ENCODE measurements at regions of chr15 and their contacts with region 1.

Region 1: DNA sequence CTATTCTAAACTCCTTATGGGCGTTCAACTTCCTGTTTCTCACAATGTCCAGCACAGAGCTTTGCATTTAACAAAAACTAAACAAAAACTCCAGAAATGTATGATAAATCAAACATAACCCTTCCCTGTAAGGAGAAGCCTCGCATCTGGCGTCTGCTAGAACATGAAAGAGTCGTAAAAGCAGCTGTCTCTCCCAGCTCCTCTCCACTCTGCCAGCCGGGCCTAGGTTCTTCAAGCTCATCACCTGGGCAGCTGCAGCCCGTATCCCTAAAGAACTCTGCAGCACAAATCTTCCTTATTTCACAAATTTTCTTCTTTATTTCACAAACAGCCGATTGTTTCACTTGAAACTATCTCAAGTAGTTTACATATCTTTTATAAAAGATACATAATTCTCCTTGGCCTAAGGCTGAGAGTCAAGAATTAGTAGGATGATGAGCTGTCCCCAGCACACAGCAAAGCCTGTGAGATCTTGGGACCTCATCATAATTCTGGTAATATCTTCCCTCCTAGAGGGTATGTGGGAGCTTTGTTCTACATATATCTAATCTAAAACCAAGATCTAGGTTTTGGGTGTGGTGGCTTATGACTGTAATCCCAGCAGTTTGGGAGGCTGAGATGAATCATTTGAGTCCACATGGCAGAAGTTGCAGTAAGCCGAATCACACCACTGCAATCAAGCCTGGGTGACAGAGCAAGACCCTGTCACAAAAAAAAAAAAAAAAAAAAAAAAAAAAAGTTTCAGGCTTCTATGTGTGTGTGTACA is 35.3 kb downstream of the ANXA2 start:
- DNase-seq: no peak
- H3K4me3 ChIP-seq: no peak overlapping the region
- H3K27ac ChIP-seq: peak overlapping the region in 1 of 59 donors; percentile 1
- H3K27me3 ChIP-seq: no peaks in the 10 kb centered on the region
- CTCF ChIP-seq: no peak

Region 2: DNA sequence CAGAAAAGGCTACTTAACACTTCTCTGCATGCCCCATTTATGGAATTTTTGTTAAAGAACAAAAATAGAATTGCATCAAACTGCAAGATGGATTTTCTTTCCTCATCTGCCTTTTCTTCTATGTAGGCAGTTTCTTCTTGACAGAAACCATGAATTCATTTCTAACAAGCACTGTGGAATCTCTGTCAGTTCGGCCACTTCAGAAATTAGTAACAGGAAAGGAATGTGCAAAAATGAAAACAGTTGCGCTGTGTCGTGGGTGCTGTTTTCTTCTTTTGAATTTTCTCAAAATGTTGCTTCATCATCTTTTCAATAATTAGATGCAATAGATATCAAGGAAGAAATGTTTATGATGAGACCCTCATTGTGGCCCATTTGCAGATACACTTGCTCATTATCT is 206.8 kb before region 1 on chr15:
- intact Hi-C with region 1: no loop called
- DNase-seq: no peak
- H3K4me3 ChIP-seq: no peak overlapping the region
- H3K27ac ChIP-seq: no peak overlapping the region
- H3K27me3 ChIP-seq: peaks cover 0 to 47% (median 4%) of the 10 kb centered on the region in 45 donors
- CTCF ChIP-seq: no peak

Region 3: GRCh38 chr15:60255390-60255789 is 107.1 kb before region 1 on chr15:
- intact Hi-C with region 1: no loop called
- DNase-seq: no peak
- H3K4me3 ChIP-seq: no peak overlapping the region
- H3K27ac ChIP-seq: no peak overlapping the region
- H3K27me3 ChIP-seq: peaks cover 0 to 17% (median 0%) of the 10 kb centered on the region in 45 donors
- CTCF ChIP-seq: no peak

Region 4: GRCh38 chr15:60438646-60439045 is 76.1 kb after region 1 on chr15:
- intact Hi-C with region 1: loop called (anchors 5 to 10 kb)
- DNase-seq: no peak
- H3K4me3 ChIP-seq: no peak overlapping the region
- H3K27ac ChIP-seq: no peak overlapping the region
- H3K27me3 ChIP-seq: no peaks in the 10 kb centered on the region
- CTCF ChIP-seq: no peak

Region 5: GRCh38 chr15:60444289-60444912 is 81.9 kb after region 1 on chr15:
- intact Hi-C with region 1: loop called (anchors 5 to 10 kb)
- DNase-seq: no peak
- H3K4me3 ChIP-seq: no peak overlapping the region
- H3K27ac ChIP-seq: no peak overlapping the region
- H3K27me3 ChIP-seq: no peaks in the 10 kb centered on the region
- CTCF ChIP-seq: peak in 55 of 56 donors; percentile 34 to 77 (median 55)

Region 6: DNA sequence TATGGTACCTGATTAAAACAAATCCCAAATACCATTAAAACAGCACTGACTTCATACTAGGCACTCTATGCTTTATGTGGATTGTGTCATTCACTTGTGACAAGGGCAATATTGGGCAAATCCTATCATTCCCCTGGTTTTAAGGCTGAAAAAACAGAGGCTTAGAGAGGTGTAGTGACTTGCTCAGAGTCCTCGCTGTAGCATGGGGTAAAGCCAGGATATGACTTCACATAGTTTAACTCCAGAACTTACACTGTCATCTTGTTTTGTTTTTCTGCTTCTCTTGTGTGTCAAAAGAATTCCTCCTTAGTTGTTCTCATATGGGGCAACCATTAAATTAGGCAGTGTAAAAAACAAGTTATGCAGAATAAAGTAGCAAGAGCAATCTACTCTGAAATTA is 156.7 kb after region 1 on chr15:
- intact Hi-C with region 1: loop called in 1 of 2 experiments (anchors 5 kb)
- DNase-seq: no peak
- H3K4me3 ChIP-seq: no peak overlapping the region
- H3K27ac ChIP-seq: no peak overlapping the region
- H3K27me3 ChIP-seq: no peaks in the 10 kb centered on the region
- CTCF ChIP-seq: no peak